Activated naive CD4-positive, alpha-beta T cell treated with anti-CD3 and anti-CD28 coated beads, Interleukin-2, amount 10 ng/mL, durations not matched to agents 7 days and 5 days (primary cell): ENCODE measurements at regions of chr3 and their contacts with region 1.

Region 1: GRCh38 chr3:186540221-186540834 is 3.9 kb downstream of the CRYGS start:
- DNase-seq: peak; percentile 89
- H3K4me3 Mint-ChIP-seq: no peak overlapping the region
- H3K27ac Mint-ChIP-seq: no peak overlapping the region
- H3K4me1 Mint-ChIP-seq: peaks cover 9% of the 10 kb centered on the region
- H3K27me3 Mint-ChIP-seq: peaks cover 4% of the 10 kb centered on the region

Region 2: GRCh38 chr3:185976977-185977678 is 563.2 kb before region 1 on chr3:
- CTCF ChIA-PET with region 1: interaction called, 27 read pairs
- DNase-seq: peak; percentile 88
- H3K4me3 Mint-ChIP-seq: no peak overlapping the region
- H3K27ac Mint-ChIP-seq: no peak overlapping the region
- H3K4me1 Mint-ChIP-seq: peaks cover 9% of the 10 kb centered on the region
- H3K27me3 Mint-ChIP-seq: peaks cover 4% of the 10 kb centered on the region

Region 3: DNA sequence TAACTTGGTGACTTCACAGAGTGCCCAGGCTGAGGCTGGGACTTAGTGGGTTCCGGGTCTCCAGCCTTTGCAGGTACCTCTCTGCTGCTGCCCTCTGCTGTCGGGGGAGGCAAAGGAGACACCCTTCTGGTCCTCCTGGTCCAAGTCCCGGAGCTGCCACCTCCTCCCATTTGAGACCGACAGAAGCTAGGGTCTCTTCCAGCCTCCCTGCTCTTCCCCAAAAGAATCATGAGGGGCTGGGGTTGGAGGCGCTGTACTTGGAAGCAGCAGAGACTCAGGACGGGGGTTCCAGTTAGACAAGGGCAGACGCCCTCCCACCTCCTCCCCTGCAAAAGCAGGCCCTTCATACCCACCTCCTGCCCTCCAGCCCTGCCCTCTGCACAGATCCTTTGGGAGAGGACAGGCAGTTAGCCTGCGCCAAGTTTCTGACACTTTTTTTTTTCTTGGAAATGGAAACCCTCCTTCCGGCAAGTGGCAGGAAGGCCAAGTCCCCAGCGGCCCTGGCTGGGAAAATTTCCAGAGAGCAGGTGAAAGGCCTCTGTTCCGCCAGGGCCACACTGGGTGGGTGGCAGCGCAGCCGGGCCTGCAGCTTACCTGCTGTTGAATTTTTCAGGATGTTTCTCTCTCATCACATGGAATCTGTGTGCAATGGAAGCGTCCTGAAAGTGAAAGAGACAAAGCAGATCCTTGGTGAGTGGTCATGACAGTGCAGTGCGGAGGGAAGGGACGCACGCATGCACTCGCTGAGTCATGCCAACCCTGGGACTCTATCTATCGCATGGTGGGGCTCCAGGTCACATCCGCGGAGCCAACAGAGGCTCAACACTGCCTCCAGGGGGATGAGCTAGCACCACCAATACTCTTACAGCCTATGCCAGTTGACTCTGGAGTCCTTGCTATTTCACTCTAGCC is 298.2 kb before region 1 on chr3:
- CTCF ChIA-PET with region 1: interaction called, 14 read pairs
- DNase-seq: peak; percentile 76
- H3K4me3 Mint-ChIP-seq: no peak overlapping the region
- H3K27ac Mint-ChIP-seq: no peak overlapping the region
- H3K4me1 Mint-ChIP-seq: peaks cover 20% of the 10 kb centered on the region
- H3K27me3 Mint-ChIP-seq: peaks cover 25% of the 10 kb centered on the region

Region 4: GRCh38 chr3:186264608-186265400 is 275.5 kb before region 1 on chr3:
- CTCF ChIA-PET with region 1: interaction called, 107 read pairs
- DNase-seq: no peak
- H3K4me3 Mint-ChIP-seq: no peak overlapping the region
- H3K27ac Mint-ChIP-seq: no peak overlapping the region
- H3K4me1 Mint-ChIP-seq: peaks cover 3% of the 10 kb centered on the region
- H3K27me3 Mint-ChIP-seq: peaks cover 10% of the 10 kb centered on the region

Region 5: DNA sequence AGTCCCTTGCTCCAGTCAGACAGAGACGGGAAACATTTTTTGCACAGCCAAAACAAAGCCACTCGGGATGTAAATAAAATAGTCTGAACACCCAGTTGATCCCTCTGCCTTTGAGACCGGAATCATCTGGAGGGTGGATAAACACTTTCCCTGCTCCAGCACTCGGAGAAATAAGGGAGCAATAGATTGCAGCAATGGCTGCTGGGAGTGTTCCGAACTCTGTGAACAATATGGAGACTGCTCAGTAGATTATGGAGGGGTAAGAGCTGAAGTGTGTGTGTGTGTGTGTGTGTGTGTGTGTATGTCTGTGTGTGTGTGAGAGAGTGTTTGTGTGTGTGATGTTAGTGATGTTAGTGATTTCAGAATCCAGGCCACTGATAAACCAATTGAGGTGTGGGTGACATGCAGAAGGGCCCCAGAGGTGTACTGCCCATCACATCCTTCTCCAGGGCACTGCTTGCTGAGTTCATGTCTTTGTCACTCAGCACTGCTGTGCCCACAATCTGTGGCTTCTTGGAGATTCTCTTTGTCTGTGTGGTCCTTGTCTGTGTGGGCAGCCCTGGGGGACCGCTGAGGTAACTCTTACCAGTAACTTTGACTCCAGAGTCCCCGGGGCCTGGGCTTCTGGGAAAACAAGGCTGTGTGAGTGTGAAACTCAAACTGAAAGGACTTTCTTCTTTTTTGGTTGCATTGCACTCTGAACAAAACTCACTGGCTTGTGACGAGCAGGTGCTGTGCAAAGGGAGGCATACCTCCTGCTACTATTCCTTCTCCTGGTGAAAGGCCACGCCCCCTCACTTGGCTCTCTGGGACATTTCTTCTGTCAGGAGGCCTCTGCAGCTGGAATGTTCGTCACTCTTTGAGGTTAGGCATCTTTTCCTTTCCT is 19.1 kb before region 1 on chr3:
- CTCF ChIA-PET with region 1: interaction called, 19 read pairs
- DNase-seq: no peak
- H3K4me3 Mint-ChIP-seq: no peak overlapping the region
- H3K27ac Mint-ChIP-seq: no peak overlapping the region
- H3K4me1 Mint-ChIP-seq: peaks cover 43% of the 10 kb centered on the region
- H3K27me3 Mint-ChIP-seq: peaks cover 7% of the 10 kb centered on the region

Region 6: DNA sequence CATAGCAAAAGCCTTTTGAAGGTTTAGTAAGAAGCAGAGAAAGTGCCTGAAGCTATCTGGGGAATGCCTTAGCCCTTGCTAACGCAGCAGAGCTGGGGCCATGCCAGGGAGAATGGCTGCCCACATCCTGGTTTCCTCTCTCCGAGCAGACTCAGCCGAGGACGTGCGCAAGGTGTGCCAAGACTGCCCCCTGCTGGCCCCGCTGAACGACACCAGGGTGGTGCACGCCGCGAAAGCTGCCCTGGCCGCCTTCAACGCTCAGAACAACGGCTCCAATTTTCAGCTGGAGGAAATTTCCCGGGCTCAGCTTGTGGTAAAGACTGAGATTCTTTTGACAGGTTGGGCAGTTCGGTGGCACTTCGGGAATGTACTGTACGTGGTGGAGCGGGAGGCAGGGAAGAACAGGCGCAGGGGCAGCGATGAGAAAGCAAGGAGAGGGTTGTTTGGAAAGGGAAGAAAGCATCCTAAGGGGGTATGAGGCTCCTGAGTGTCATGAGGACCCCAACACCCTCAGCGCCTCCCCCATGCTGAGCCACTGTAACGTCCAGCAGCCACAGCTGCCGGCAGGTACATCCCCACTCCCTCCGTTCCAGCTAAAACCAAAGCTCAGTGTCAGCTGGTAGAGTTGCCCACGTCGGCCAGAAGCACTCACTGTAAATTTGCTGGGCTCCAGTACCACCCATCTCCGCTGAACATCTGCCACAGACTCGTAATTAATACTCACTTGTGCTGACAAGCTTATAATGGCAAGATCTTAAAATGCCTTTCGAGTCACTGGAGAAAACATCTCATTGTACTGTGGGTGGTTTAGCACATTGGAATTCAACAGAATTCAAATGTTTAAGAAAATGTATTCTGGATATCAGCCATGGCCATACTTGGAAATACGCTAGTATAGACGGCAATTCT is 77.0 kb after region 1 on chr3:
- CTCF ChIA-PET with region 1: interaction called, 51 read pairs
- DNase-seq: peak; percentile 89
- H3K4me3 Mint-ChIP-seq: peak overlapping the region; percentile 19
- H3K27ac Mint-ChIP-seq: no peak overlapping the region
- H3K4me1 Mint-ChIP-seq: peaks cover 22% of the 10 kb centered on the region
- H3K27me3 Mint-ChIP-seq: peaks cover 59% of the 10 kb centered on the region

Region 7: GRCh38 chr3:186849374-186849975 is 309.1 kb after region 1 on chr3:
- CTCF ChIA-PET with region 1: no interaction called
- DNase-seq: no peak
- H3K4me3 Mint-ChIP-seq: no peak overlapping the region
- H3K27ac Mint-ChIP-seq: no peak overlapping the region
- H3K4me1 Mint-ChIP-seq: peaks cover 14% of the 10 kb centered on the region
- H3K27me3 Mint-ChIP-seq: peaks cover 20% of the 10 kb centered on the region